Aorta (tissue), 5 donors: ENCODE measurements at regions of chr15 and their contacts with region 1.

Region 1: DNA sequence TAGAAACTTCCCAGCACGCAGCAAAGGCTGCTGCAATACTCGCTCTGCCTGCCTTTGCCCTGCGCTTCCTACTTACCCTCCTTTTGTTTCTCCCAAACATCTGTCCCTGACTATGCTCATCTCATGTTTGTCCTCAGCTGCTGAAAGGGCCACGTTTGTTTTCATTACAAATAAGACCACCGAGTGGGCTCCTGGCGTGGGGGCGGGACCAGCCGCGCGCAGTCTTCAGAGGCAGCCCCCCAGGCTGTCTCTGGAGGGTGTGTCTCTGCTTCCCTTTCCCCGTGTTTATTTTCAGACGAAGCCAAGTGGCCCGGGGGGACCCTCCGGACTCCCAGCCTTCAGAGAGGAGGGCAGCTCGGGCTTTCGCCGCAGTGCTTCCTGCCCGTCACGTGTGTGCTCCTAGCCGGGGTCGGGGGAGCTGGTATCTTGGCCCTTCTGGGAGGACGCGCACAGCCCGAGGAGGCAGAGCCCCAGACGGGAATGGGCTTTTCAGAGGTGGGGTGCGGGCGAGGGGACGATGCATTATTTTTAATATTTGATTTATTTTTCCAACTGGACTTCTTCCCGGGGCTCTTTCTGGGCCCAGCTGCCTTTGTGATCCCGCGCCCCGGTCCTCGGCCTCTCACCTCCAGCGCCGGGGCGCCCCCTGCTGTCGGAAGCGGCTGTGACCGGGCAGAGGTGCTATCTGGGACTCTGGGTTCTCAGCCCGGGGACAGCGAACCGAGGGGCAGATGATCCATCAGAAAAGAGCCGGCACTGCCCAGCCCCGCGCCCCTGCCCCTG is 70.0 kb upstream of the CGNL1 start:
- DNase-seq: peak; percentile 91 to 96
- ATAC-seq: peak; percentile 90
- H3K4me3 ChIP-seq: peak overlapping the region in 1 of 2 donors; percentile 23
- H3K27ac ChIP-seq: no peak overlapping the region
- H3K4me1 ChIP-seq: no peaks in the 10 kb centered on the region
- H3K27me3 ChIP-seq: no peaks in the 10 kb centered on the region

Region 2: GRCh38 chr15:56496635-56497034 is 809.7 kb before region 1 on chr15:
- intact Hi-C with region 1: loop called (anchors 5 kb)
- DNase-seq: no peak
- ATAC-seq: peak; percentile 77
- H3K4me3 ChIP-seq: peak overlapping the region in 1 of 2 donors; percentile 24
- H3K27ac ChIP-seq: no peak overlapping the region
- H3K4me1 ChIP-seq: no peaks in the 10 kb centered on the region
- H3K27me3 ChIP-seq: no peaks in the 10 kb centered on the region

Region 3: GRCh38 chr15:56821721-56822425 is 484.5 kb before region 1 on chr15:
- intact Hi-C with region 1: loop called in 1 of 2 experiments (anchors 10 kb)
- DNase-seq: peak; percentile 68 to 78
- ATAC-seq: peak; percentile 63
- H3K4me3 ChIP-seq: no peak overlapping the region
- H3K27ac ChIP-seq: no peak overlapping the region
- H3K4me1 ChIP-seq: peaks cover 0 to 3% of the 10 kb centered on the region in 2 donors
- H3K27me3 ChIP-seq: no peaks in the 10 kb centered on the region

Region 4: DNA sequence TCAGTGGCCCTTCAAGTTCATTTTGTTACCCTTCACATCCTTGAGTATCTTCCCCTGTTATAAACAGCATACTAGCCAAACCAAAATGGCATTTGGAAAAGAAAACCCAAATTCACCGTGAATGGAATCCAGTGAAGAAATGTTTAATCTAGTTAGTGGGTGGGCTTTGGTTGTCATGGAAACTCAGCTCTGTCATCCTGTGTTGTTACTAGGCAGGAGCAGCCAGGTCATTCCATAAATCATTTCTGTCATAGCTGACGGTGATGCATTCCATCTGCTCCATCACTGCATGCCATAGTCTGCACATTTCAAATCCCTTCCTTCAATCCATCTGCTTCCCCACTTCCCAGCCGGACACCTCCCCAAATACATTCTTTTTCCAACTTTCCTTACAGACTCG is 70.5 kb before region 1 on chr15:
- intact Hi-C with region 1: loop called in 1 of 2 experiments (anchors 10 kb)
- DNase-seq: no peak
- ATAC-seq: no peak
- H3K4me3 ChIP-seq: no peak overlapping the region
- H3K27ac ChIP-seq: no peak overlapping the region
- H3K4me1 ChIP-seq: peaks cover 0 to 4% of the 10 kb centered on the region in 2 donors
- H3K27me3 ChIP-seq: no peaks in the 10 kb centered on the region

Region 5: GRCh38 chr15:57345584-57345983 is 39.2 kb after region 1 on chr15:
- intact Hi-C with region 1: no loop called
- DNase-seq: no peak
- ATAC-seq: no peak
- H3K4me3 ChIP-seq: no peak overlapping the region
- H3K27ac ChIP-seq: no peak overlapping the region
- H3K4me1 ChIP-seq: no peaks in the 10 kb centered on the region
- H3K27me3 ChIP-seq: no peaks in the 10 kb centered on the region